ENCODE measurements at regions of chr10 and their contacts with region 1.

Region 1: DNA sequence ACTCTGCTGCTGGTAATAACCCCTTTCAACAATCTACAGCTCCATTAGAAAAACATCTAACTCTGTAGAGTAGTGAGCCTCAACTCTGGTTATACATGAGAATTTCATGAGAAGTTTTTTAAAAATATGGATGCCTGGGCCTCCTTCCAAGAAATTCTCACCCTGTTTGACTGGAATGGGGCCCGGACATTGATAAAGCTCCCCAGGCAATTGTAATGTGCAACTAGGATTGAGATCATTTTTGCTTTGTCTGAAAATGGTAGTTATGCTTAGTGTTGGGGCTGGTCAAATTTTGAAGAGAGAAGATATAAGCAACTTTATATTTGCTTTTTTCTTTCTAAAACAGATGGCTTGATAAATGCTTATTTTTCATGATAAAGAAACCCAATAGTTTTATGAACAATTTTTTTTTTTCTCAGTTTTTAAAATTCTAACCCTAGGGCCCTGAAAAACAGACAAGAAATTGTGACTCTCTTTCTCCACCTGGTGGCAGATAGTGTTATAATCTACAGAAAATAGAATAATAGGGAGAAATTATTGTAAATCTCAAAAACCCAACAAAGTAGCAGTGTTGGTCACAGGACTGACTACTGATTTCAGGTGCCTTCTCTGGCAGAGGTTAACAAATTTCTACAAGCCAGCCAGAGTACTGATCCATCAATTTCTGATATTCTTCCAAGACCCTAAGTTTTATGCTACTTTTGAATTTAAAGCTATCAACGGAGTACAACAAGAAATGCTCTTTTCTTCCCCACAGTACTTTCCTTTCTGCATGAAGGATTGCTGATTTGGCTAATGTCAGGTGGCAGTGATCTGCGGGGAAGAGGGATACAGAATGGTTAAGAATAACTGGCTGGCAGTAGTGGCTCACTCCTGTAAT is 174.8 kb downstream of the DKK1 start:
- DNase-seq: peak; percentile 67
- H3K4me3 ChIP-seq: no peak overlapping the region
- H3K27ac ChIP-seq: peak overlapping the region; percentile 64
- H3K4me1 ChIP-seq: peaks cover 39% of the 10 kb centered on the region
- H3K27me3 ChIP-seq: no peaks in the 10 kb centered on the region
- CTCF ChIP-seq: peak in 1 of 2 donors; percentile 32
- POLR2A ChIP-seq: no peak

Region 2: GRCh38 chr10:51063659-51064535 is 1424.9 kb before region 1 on chr10:
- CTCF ChIA-PET with region 1: no interaction called
- POLR2A ChIA-PET with region 1: no interaction called
- dilution Hi-C with region 1: no loop called
- intact Hi-C with region 1: no loop called
- DNase-seq: peak; percentile 62
- H3K4me3 ChIP-seq: no peak overlapping the region
- H3K27ac ChIP-seq: no peak overlapping the region
- H3K4me1 ChIP-seq: no peaks in the 10 kb centered on the region
- H3K27me3 ChIP-seq: no peaks in the 10 kb centered on the region
- CTCF ChIP-seq: peak; percentile 31 to 41
- POLR2A ChIP-seq: no peak

Region 3: GRCh38 chr10:51340845-51341610 is 1147.8 kb before region 1 on chr10:
- CTCF ChIA-PET with region 1: no interaction called
- POLR2A ChIA-PET with region 1: no interaction called
- dilution Hi-C with region 1: no loop called
- intact Hi-C with region 1: no loop called
- DNase-seq: peak; percentile 60
- H3K4me3 ChIP-seq: no peak overlapping the region
- H3K27ac ChIP-seq: no peak overlapping the region
- H3K4me1 ChIP-seq: peaks cover 8% of the 10 kb centered on the region
- H3K27me3 ChIP-seq: no peaks in the 10 kb centered on the region
- CTCF ChIP-seq: no peak
- POLR2A ChIP-seq: no peak

Region 4: DNA sequence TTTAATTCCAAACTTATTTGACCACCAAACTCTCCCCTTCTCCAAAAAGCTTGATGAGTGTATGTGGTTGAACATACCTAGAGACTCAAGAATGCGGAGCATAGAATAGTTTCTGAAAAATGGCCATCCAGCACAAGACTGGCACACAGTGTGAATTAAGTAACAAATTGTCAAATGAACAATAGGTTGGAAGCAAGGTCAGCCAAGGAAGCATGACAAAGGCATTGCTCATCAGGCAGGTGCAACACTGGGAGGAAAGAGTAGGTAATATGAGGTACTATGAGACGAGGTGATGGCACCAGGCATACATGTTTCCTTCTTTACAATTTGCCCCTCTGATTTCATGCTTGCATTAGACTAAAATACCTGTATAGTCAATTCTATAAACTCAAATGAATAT is 101.1 kb before region 1 on chr10:
- CTCF ChIA-PET with region 1: interaction called, 4 read pairs
- POLR2A ChIA-PET with region 1: no interaction called
- dilution Hi-C with region 1: no loop called
- intact Hi-C with region 1: loop called (anchors 5 kb)
- DNase-seq: peak; percentile 62
- H3K4me3 ChIP-seq: no peak overlapping the region
- H3K27ac ChIP-seq: no peak overlapping the region
- H3K4me1 ChIP-seq: peaks cover 9% of the 10 kb centered on the region
- H3K27me3 ChIP-seq: no peaks in the 10 kb centered on the region
- CTCF ChIP-seq: no peak
- POLR2A ChIP-seq: no peak

Region 5: DNA sequence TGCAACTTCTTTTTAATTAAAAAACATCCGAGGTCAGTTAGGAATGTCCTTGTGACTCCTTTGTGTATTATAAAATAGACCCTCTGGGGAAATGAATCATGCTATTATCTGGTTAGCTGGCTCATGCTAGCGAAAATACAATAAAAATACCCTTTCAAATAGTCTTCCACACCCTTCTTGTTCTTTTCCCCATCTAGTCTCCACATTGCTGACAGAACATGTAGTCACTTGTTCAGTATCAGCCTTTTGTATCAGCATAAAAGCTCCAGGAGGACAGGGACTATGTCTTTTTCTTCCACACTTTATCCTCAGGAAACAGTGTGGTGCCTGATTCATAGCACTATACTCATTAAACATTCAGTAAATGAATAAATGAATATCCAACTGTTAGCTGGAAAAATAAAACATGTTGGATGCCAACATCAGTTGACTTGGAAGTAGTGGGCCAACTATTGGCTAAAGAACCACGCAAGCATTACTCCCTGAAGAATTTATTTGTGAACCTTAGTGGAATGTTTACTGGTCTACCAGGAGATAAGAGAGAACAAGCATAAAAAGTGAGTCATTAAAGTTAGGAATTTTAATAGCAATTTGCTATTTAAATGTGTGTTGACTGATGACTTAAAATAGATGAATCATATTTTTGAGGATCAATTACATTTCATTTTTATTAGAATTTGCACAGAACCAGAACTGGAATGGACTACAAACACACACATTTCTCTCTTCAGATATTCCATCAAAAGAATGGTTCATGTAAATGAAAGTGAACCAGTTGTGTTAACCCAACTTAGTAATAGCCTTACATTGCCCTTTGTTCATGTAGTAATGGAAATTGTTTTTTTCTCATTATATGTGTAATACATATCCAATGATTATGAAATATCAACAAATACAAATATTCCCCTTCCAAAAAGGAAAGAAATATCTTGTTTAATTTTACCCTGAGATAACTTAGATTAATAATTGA is 45.1 kb before region 1 on chr10:
- CTCF ChIA-PET with region 1: interaction called, 18 read pairs
- POLR2A ChIA-PET with region 1: no interaction called
- dilution Hi-C with region 1: no loop called
- intact Hi-C with region 1: loop called (anchors 1 kb)
- DNase-seq: peak; percentile 85
- H3K4me3 ChIP-seq: no peak overlapping the region
- H3K27ac ChIP-seq: peak overlapping the region; percentile 96
- H3K4me1 ChIP-seq: peaks cover 21% of the 10 kb centered on the region
- H3K27me3 ChIP-seq: no peaks in the 10 kb centered on the region
- CTCF ChIP-seq: no peak
- POLR2A ChIP-seq: no peak

Region 6: GRCh38 chr10:52566471-52567246 is 77.8 kb after region 1 on chr10:
- CTCF ChIA-PET with region 1: interaction called, 76 read pairs
- POLR2A ChIA-PET with region 1: interaction called, 4 read pairs
- dilution Hi-C with region 1: no loop called
- intact Hi-C with region 1: loop called (anchors 1 kb)
- DNase-seq: peak; percentile 81
- H3K4me3 ChIP-seq: no peak overlapping the region
- H3K27ac ChIP-seq: no peak overlapping the region
- H3K4me1 ChIP-seq: peaks cover 14% of the 10 kb centered on the region
- H3K27me3 ChIP-seq: no peaks in the 10 kb centered on the region
- CTCF ChIP-seq: peak; percentile 18 to 47
- POLR2A ChIP-seq: no peak

Region 7: GRCh38 chr10:52729271-52730104 is 240.6 kb after region 1 on chr10:
- CTCF ChIA-PET with region 1: interaction called, 6 read pairs
- POLR2A ChIA-PET with region 1: no interaction called
- dilution Hi-C with region 1: no loop called
- intact Hi-C with region 1: loop called (anchors 2 kb)
- DNase-seq: peak; percentile 66
- H3K4me3 ChIP-seq: no peak overlapping the region
- H3K27ac ChIP-seq: no peak overlapping the region
- H3K4me1 ChIP-seq: peaks cover 3% of the 10 kb centered on the region
- H3K27me3 ChIP-seq: no peaks in the 10 kb centered on the region
- CTCF ChIP-seq: peak; percentile 30 to 39
- POLR2A ChIP-seq: no peak

Measured in endothelial cell of umbilical vein (primary cell).